Tibial artery (tissue), 4 donors: ENCODE measurements at regions of chr11 and their contacts with region 1.

Region 1: GRCh38 chr11:1546536-1547400 is 25.3 kb downstream of the DUSP8 start:
- DNase-seq: no peak
- H3K4me3 ChIP-seq: peak overlapping the region; percentile 50 to 51
- H3K27ac ChIP-seq: peak overlapping the region; percentile 81 to 86
- H3K4me1 ChIP-seq: peaks cover 4 to 34% (median 30%) of the 10 kb centered on the region in 4 donors
- H3K27me3 ChIP-seq: peaks cover 0 to 20% of the 10 kb centered on the region in 2 donors
- CTCF ChIP-seq: peak; percentile 87 to 88

Region 2: DNA sequence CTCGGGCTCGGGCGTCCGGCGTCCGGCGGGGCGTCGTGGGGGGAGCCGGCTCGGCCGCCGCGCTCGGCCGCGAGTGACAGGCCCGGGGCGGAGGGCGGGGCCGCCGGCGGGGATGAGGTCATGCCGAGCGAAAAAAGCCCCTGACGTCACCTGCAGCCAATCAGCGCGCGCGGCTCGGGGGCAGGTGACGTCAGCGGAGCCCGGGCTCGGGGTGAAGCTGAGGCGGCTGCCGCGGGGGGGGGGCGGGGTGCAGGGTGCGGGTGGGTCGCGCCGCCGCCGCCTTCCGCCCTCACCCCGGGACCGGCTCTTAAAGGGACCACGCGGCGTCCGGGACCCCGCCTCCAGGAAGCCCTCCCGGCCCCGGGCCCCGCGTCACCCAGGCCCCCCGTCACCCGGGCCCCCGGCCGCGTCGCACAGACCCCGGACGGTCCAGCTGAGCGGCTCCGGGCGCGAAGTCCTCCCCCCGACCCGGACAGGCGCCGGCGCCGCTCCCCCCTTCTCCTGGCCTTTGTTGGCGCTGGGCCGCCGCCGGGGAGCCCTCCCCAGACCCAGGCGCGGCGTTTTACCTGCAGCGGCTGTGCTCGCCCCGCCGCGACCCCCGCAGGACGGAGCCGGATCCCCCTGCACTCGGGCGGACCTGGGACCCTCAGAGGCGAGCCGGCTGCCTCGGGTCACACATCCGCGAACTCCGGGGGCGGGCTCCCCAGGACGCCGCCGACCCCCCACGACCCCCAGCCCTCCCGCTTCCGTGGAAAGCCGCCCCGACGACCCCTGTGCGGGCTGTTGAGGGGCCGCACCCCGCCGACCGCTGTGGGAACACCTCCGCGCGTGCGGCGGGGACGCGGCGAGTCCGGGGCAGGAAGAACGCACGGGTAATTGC is 25.7 kb after region 1 on chr11 and contains the start of gene DUSP8:
- intact Hi-C with region 1: loop called (anchors 1 kb)
- DNase-seq: peak; percentile 88 to 96
- H3K4me3 ChIP-seq: peak within 1 kb of the TSS; percentile 65 to 85
- H3K27ac ChIP-seq: peak within 1 kb of the TSS; percentile 85 to 89
- H3K4me1 ChIP-seq: peaks cover 0 to 64% (median 58%) of the 10 kb centered on the region in 4 donors
- H3K27me3 ChIP-seq: no peaks in the 10 kb centered on the region
- CTCF ChIP-seq: no peak

Region 3: GRCh38 chr11:1628506-1629325 is 81.9 kb after region 1 on chr11:
- intact Hi-C with region 1: loop called (anchors 10 kb)
- DNase-seq: no peak
- H3K4me3 ChIP-seq: no peak overlapping the region
- H3K27ac ChIP-seq: no peak overlapping the region
- H3K4me1 ChIP-seq: no peaks in the 10 kb centered on the region
- H3K27me3 ChIP-seq: peaks cover 0 to 61% of the 10 kb centered on the region in 2 donors
- CTCF ChIP-seq: peak; percentile 63 to 86

Region 4: GRCh38 chr11:1852877-1853276 is 306.1 kb after region 1 on chr11 and contains the start of gene LSP1:
- intact Hi-C with region 1: no loop called
- DNase-seq: no peak
- H3K4me3 ChIP-seq: peak within 1 kb of the TSS in 1 of 2 donors; percentile 22
- H3K27ac ChIP-seq: no peak within 1 kb of the TSS
- H3K4me1 ChIP-seq: no peaks in the 10 kb centered on the region
- H3K27me3 ChIP-seq: no peaks in the 10 kb centered on the region
- CTCF ChIP-seq: no peak

Region 5: GRCh38 chr11:2415601-2416380 is 869.0 kb after region 1 on chr11:
- intact Hi-C with region 1: no loop called
- DNase-seq: no peak
- H3K4me3 ChIP-seq: no peak overlapping the region
- H3K27ac ChIP-seq: no peak overlapping the region
- H3K4me1 ChIP-seq: peaks cover 0 to 8% (median 3%) of the 10 kb centered on the region in 4 donors
- H3K27me3 ChIP-seq: peaks cover 0 to 17% of the 10 kb centered on the region in 2 donors
- CTCF ChIP-seq: no peak